Thyroid gland (tissue), 4 donors: ENCODE measurements at regions of chr3 and their contacts with region 1.

Region 1: DNA sequence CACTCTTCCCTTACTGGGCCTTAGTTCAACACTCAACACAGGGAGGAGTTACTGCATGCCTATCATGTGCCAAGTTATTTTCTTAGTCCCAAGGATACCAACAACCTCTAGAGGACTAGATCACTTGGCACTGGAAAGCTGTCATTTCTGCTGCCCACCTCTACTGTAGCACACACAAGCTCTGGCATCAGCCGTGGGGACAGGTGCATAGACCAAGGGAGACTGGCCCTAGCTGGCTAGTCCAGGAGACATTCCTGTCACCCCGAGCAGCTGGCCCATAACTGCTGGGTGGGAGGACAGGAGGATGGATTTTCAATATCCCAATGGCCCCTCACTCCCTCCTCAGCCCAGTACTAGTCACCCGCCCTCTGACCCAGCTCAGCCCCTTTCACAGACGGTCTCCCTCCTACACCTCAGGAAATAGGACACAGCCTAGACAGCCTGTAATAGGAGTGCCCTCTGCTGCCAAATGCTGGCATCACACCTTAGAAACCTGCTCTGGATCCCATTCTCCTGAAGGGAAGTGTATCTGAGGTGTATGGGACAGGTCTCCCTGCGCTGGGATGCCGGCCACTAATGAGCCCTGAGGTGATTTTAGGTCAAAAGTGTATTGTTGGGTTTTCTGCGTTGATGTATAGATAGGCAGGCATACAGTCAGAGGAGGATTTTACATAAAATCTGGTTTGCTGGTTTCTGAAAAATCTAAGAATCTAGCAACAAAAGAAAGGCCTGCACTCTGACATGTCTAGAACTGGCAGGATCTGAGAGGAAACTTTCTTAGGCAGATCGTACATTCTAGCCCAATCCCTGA is 3.4 kb upstream of the DZIP1L start:
- DNase-seq: peak; percentile 77 to 81
- H3K4me3 ChIP-seq: no peak overlapping the region
- H3K27ac ChIP-seq: no peak overlapping the region
- H3K4me1 ChIP-seq: peaks cover 16 to 19% of the 10 kb centered on the region in 2 donors
- H3K27me3 ChIP-seq: no peaks in the 10 kb centered on the region
- CTCF ChIP-seq: peak in 5 of 6 experiments; percentile 63 to 86 (median 84)
- POLR2A ChIP-seq: no peak

Region 2: DNA sequence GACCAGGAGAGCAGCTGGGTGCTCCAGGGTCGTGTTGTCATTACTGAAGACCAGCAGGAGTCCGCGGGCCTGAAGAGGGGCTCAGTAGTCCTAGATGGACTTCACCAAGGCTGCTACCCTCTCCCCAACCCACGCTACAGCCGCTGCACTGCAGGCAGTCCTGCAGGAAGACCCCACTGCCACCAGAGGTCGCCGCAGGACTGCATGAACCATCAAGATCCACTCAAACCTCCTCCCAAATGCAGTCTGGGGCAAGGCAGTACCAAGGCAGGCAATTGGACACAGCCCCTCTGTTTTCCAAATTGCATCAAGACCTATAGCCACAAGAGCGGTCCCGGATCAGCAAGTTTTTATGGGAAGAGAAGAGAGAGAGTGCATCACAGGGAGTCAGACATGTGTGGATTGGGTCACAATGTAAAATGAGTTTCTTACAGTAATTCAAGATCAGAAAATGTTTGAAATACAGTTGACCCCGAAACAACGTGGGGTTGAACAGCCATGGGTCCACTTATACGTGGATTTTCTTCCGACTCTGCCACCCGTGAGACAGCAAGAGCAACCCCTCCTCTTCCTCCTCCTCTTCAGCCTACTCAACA is 50.1 kb before region 1 on chr3:
- intact Hi-C with region 1: loop called (anchors 2 kb)
- DNase-seq: peak; percentile 80 to 86
- H3K4me3 ChIP-seq: no peak overlapping the region
- H3K27ac ChIP-seq: no peak overlapping the region
- H3K4me1 ChIP-seq: peaks cover 18 to 29% of the 10 kb centered on the region in 2 donors
- H3K27me3 ChIP-seq: no peaks in the 10 kb centered on the region
- CTCF ChIP-seq: peak; percentile 91 to 99 (median 98)
- POLR2A ChIP-seq: no peak